IMR-90 (cell line): ENCODE measurements at regions of chr9 and their contacts with region 1.

Region 1: DNA sequence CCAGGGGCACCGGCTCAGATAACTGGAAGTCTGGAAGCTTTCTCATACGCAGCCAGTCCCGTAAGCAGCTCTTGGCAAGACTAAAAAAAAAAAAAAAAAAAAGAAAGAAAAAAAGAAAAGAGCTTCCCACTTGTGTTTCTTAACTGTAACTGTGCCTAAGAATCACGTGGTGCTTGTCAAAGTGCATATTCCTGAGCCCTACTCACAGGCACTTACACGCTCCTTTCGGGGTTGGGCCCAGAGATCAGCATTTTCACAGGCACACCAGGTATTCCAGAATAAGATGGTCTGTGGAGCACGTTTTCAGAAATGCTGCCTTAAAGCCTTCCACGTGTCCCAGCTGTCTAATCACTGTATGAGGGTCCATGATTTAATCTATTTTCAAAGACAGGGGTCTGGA is 22.6 kb upstream of the SH3GL2 start:
- DNase-seq: no peak
- ATAC-seq: no peak
- H3K4me3 ChIP-seq: no peak overlapping the region
- H3K27ac ChIP-seq: no peak overlapping the region
- H3K4me1 ChIP-seq: no peaks in the 10 kb centered on the region
- H3K27me3 ChIP-seq: peaks cover 2% of the 10 kb centered on the region; the same call in 1 of the 2 replicates
- CTCF ChIP-seq: no peak
- POLR2A ChIP-seq: no peak
- RAD21 ChIP-seq: no peak

Region 2: DNA sequence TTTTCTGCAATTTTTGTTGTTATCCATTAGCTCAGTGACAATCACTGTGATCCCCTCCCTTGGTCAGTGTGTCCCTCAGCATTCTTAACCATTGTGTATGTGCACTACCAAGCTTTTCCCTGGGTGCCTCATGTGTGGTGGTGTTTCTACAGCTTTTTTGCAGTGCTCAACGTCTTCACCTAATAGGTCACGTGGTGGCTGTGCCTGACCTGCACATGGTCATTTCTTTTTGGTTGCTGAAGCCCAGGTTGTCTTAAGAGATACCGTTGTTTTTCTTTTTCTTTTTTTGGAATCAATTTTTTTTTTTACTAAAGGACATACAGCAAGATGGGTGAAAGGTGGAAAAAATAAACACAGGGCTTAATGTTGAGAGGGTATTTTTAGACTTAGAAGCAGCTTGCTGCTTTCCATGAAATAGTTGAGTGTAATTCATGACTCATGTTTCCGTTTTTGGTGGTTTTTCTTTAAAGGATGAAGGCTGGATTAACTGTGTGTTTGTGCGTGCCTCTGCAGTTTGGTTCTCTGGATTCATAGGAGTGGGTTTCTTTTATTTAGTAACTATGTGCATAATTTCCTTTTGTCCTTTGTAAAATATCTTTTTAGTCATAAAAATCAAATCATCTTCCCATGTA is 44.8 kb after region 1 on chr9:
- CTCF ChIA-PET with region 1: no interaction called
- POLR2A ChIA-PET with region 1: no interaction called
- dilution Hi-C with region 1: no loop called
- in situ Hi-C with region 1: no loop called
- intact Hi-C with region 1: no loop called
- DNase-seq: peak; percentile 60
- ATAC-seq: peak; percentile 17; the same call in 1 of the 2 replicates
- H3K4me3 ChIP-seq: no peak overlapping the region
- H3K27ac ChIP-seq: no peak overlapping the region
- H3K4me1 ChIP-seq: peaks cover 3% of the 10 kb centered on the region; the same call in 1 of the 2 replicates
- H3K27me3 ChIP-seq: peaks cover 3% of the 10 kb centered on the region
- CTCF ChIP-seq: no peak
- POLR2A ChIP-seq: no peak
- RAD21 ChIP-seq: no peak

Region 3: GRCh38 chr9:17930071-17930470 is 373.8 kb after region 1 on chr9:
- CTCF ChIA-PET with region 1: no interaction called
- POLR2A ChIA-PET with region 1: no interaction called
- dilution Hi-C with region 1: no loop called
- in situ Hi-C with region 1: no loop called
- intact Hi-C with region 1: loop called (anchors 10 kb)
- DNase-seq: no peak
- ATAC-seq: no peak
- H3K4me3 ChIP-seq: no peak overlapping the region
- H3K27ac ChIP-seq: no peak overlapping the region
- H3K4me1 ChIP-seq: no peaks in the 10 kb centered on the region
- H3K27me3 ChIP-seq: no peaks in the 10 kb centered on the region
- CTCF ChIP-seq: no peak
- POLR2A ChIP-seq: no peak
- RAD21 ChIP-seq: no peak